Dendritic cell treated with granulocyte-macrophage colony-stimulating factor and Interleukin-4, amounts not matched to agents 40 ng/mL and 50 ng/mL, for 4 days (primary cell): ENCODE measurements at regions of chr4 and their contacts with region 1.

Region 1: GRCh38 chr4:56575820-56576429 is 70.3 kb downstream of the ARL9 start:
- H3K4me3 Mint-ChIP-seq: no peak overlapping the region
- H3K27ac Mint-ChIP-seq: no peak overlapping the region
- H3K4me1 Mint-ChIP-seq: no peaks in the 10 kb centered on the region
- H3K27me3 Mint-ChIP-seq: no peaks in the 10 kb centered on the region

Region 2: GRCh38 chr4:55920571-55920970 is 655.4 kb before region 1 on chr4:
- intact Hi-C with region 1: no loop called
- H3K4me3 Mint-ChIP-seq: no peak overlapping the region
- H3K27ac Mint-ChIP-seq: peak overlapping the region; percentile 48
- H3K4me1 Mint-ChIP-seq: peaks cover 6% of the 10 kb centered on the region
- H3K27me3 Mint-ChIP-seq: no peaks in the 10 kb centered on the region

Region 3: DNA sequence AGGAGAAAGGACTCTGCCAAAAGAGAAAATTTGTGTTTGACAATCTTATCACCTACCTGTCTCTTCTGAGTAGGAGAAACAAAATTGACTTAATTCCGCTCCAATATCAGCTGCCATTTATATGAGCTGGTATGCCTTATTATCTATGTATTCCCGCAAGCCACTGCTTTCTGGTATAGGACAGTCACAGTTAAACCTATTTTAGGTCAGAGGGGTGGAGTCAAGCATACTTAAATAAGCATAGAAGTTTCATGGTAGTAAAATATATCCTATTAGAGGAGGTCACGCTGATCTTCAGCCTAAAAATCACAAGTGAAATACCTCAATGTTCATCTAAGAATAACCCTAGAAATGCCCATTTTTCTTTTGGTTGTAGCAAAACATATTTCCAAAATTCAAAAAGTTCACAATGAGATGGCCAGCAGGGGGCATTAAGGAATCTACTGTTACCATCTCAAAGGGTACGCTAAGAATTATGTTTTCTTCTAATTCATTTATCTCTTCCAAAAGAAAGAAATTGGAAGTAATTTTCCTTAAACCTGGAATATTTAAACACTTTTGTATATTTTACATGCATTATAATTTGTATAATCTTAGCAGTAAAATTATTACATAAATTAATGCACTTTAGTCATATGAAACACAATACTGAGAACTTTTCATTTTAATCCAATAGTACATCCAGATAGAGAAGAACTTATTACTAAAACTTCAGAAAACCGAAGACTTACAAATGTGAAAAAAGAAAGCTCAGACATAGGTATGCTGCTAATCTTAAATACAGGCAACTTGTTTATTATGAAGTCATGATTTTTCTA is 151.0 kb before region 1 on chr4:
- intact Hi-C with region 1: no loop called
- H3K4me3 Mint-ChIP-seq: no peak overlapping the region
- H3K27ac Mint-ChIP-seq: no peak overlapping the region
- H3K4me1 Mint-ChIP-seq: no peaks in the 10 kb centered on the region
- H3K27me3 Mint-ChIP-seq: no peaks in the 10 kb centered on the region

Region 4: GRCh38 chr4:56656346-56656643 is 80.4 kb after region 1 on chr4:
- intact Hi-C with region 1: no loop called
- H3K4me3 Mint-ChIP-seq: peak overlapping the region; percentile 61
- H3K27ac Mint-ChIP-seq: no peak overlapping the region
- H3K4me1 Mint-ChIP-seq: peaks cover 32% of the 10 kb centered on the region
- H3K27me3 Mint-ChIP-seq: peaks cover 50% of the 10 kb centered on the region

Region 5: GRCh38 chr4:56843421-56843899 is 267.5 kb after region 1 on chr4:
- intact Hi-C with region 1: loop called (anchors 5 kb)
- H3K4me3 Mint-ChIP-seq: no peak overlapping the region
- H3K27ac Mint-ChIP-seq: no peak overlapping the region
- H3K4me1 Mint-ChIP-seq: peaks cover 5% of the 10 kb centered on the region
- H3K27me3 Mint-ChIP-seq: no peaks in the 10 kb centered on the region

Region 6: GRCh38 chr4:56892691-56893090 is 316.8 kb after region 1 on chr4:
- intact Hi-C with region 1: no loop called
- H3K4me3 Mint-ChIP-seq: no peak overlapping the region
- H3K27ac Mint-ChIP-seq: no peak overlapping the region
- H3K4me1 Mint-ChIP-seq: no peaks in the 10 kb centered on the region
- H3K27me3 Mint-ChIP-seq: no peaks in the 10 kb centered on the region